ENCODE measurements at regions of chr18 and their contacts with region 1.

Region 1: GRCh38 chr18:48475635-48476549 is 62.9 kb upstream of the CTIF start:
- DNase-seq: peak; percentile 44
- H3K4me3 ChIP-seq: no peak overlapping the region
- H3K27ac ChIP-seq: no peak overlapping the region
- H3K4me1 ChIP-seq: no peaks in the 10 kb centered on the region
- H3K27me3 ChIP-seq: no peaks in the 10 kb centered on the region
- CTCF ChIP-seq: peak; percentile 75 to 85 (median 80)
- POLR2A ChIP-seq: no peak

Region 2: GRCh38 chr18:48663931-48664847 is 188.3 kb after region 1 on chr18:
- intact Hi-C with region 1: loop called (anchors 2 kb)
- DNase-seq: peak; percentile 59 to 71
- H3K4me3 ChIP-seq: no peak overlapping the region
- H3K27ac ChIP-seq: no peak overlapping the region
- H3K4me1 ChIP-seq: no peaks in the 10 kb centered on the region
- H3K27me3 ChIP-seq: no peaks in the 10 kb centered on the region
- CTCF ChIP-seq: peak; percentile 79 to 85 (median 84)
- POLR2A ChIP-seq: no peak

Measured in uterus (tissue), 4 donors.